ENCODE measurements at regions of chr5 and their contacts with region 1.

Region 1: GRCh38 chr5:75744355-75744754 is 27.1 kb upstream of the POC5 start:
- DNase-seq: no peak
- ATAC-seq: no peak
- H3K4me3 ChIP-seq: no peak overlapping the region
- H3K4me3 Mint-ChIP-seq: no peak overlapping the region
- H3K27ac ChIP-seq: no peak overlapping the region
- H3K27ac Mint-ChIP-seq: no peak overlapping the region
- H3K4me1 ChIP-seq: no peaks in the 10 kb centered on the region
- H3K4me1 Mint-ChIP-seq: peaks cover 0 to 5% (median 0%) of the 10 kb centered on the region in 3 donors
- H3K27me3 ChIP-seq: peaks cover 0 to 6% of the 10 kb centered on the region in 2 experiments
- H3K27me3 Mint-ChIP-seq: peaks cover 25 to 26% of the 10 kb centered on the region in 2 donors

Region 2: DNA sequence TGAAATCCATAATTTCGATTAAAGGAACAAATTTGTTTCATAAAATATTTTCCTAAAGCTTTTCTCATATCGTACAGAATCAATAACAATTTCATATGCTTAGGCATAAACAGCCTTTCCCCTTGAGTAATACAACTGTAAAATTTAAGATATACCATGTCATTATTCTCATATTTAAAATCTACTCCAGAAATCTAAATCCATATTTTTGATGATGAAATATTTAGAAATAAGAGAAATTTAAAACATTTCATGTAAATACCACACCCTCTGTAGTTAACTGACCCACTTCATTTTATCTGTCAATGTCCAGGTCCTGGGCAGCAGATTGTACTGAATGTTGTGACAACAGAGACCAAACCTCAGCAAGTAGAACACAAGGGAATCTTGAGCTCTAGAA is 32.3 kb before region 1 on chr5:
- CTCF ChIA-PET with region 1: no interaction called
- POLR2A ChIA-PET with region 1: interaction called in 1 of 2 experiments, 12 read pairs
- DNase-seq: no peak
- ATAC-seq: no peak
- H3K4me3 ChIP-seq: no peak overlapping the region
- H3K4me3 Mint-ChIP-seq: no peak overlapping the region
- H3K27ac ChIP-seq: no peak overlapping the region
- H3K27ac Mint-ChIP-seq: no peak overlapping the region
- H3K4me1 ChIP-seq: peaks cover 2 to 4% of the 10 kb centered on the region in 2 experiments
- H3K4me1 Mint-ChIP-seq: peaks cover 50 to 57% (median 52%) of the 10 kb centered on the region in 3 donors
- H3K27me3 ChIP-seq: no peaks in the 10 kb centered on the region
- H3K27me3 Mint-ChIP-seq: no peaks in the 10 kb centered on the region

Region 3: GRCh38 chr5:75824323-75824722 is 80.0 kb after region 1 on chr5:
- CTCF ChIA-PET with region 1: no interaction called
- POLR2A ChIA-PET with region 1: no interaction called
- DNase-seq: no peak
- ATAC-seq: no peak
- H3K4me3 ChIP-seq: no peak overlapping the region
- H3K4me3 Mint-ChIP-seq: no peak overlapping the region
- H3K27ac ChIP-seq: no peak overlapping the region
- H3K27ac Mint-ChIP-seq: no peak overlapping the region
- H3K4me1 ChIP-seq: no peaks in the 10 kb centered on the region
- H3K4me1 Mint-ChIP-seq: no peaks in the 10 kb centered on the region
- H3K27me3 ChIP-seq: no peaks in the 10 kb centered on the region
- H3K27me3 Mint-ChIP-seq: peaks cover 3 to 4% of the 10 kb centered on the region in 2 donors